ENCODE measurements at regions of chr12 and their contacts with region 1.

Region 1: DNA sequence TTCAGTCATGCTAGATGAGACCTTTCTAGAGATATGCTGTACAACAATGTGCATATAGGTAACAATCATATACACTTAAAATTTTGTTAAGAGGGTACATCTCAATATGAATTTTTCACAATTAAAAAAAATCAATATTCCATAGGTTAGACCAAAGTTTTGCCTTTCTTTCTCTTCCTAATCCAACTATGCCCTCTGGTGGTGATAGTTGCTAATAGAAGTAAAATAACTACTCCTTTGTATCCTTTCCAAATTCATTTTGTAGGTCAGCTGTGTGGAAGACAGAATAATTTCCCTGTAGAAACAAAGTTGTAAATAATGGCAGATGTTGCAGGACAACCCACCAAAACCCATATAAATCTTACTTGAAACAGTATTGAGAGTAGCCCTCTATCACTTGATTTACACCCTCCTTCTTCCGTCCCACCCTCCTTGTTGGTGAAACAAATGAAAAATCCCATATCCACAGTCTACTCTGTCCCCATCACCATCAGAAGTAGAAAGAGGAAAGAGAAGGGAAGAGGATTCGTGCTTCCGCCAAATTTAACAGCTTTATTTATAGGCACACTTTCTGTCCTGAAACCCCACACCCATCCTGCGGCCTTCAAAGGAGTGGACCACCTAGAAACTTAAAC is 34.2 kb upstream of the KICS2 start:
- DNase-seq: peak; percentile 24
- H3K4me3 Mint-ChIP-seq: no peak overlapping the region
- H3K27ac Mint-ChIP-seq: no peak overlapping the region
- H3K4me1 Mint-ChIP-seq: no peaks in the 10 kb centered on the region
- H3K27me3 Mint-ChIP-seq: no peaks in the 10 kb centered on the region
- CTCF ChIP-seq: peak; percentile 65

Region 2: DNA sequence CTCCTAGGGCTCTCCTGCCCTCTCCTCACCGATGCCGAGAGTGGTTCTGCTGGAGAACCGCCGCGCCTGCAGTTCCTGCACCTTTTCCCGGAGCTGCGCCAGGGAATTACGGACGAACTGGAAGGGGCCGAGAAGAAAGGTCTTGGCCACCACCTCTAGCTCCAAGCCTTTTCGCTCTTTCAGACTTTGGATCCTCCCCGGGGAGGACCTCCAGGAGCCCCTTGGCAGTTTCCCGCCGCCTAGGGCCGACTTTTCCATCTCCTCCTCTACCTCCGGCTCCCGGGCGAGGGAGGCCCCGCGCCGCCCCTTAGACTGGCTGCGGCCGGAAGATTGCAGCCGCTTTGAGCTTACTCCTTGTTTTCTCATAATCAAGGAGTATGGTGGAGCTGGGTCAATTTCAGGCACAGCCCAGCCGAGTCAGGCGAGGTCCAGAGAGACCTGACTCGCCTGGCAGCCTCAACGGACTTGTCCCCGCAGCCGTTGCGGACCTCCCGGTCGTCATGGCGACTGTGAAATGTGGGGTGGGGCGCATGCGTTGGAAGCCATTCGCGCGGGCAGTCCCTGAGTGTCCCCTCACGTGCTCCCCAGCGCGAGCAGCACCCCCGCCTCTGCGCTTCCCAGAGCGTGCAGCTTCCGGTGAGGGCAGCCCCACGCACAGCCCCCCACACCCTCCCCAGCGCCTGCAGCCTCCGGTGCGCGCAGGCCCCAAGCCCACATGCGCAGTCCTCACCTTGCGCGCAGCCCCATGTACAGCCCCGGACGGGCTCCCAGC is 588.1 kb before region 1 on chr12 and contains the start of gene DPY19L2:
- CTCF ChIA-PET with region 1: no interaction called
- intact Hi-C with region 1: loop called (anchors 10 kb)
- DNase-seq: peak; percentile 81
- H3K4me3 Mint-ChIP-seq: peak within 1 kb of the TSS; percentile 74
- H3K27ac Mint-ChIP-seq: peak within 1 kb of the TSS; percentile 61
- H3K4me1 Mint-ChIP-seq: peaks cover 26% of the 10 kb centered on the region
- H3K27me3 Mint-ChIP-seq: peaks cover 13% of the 10 kb centered on the region
- CTCF ChIP-seq: no peak
- total RNA-seq, gene DPY19L2: 9.2 and 10.1 TPM in 2 replicates

Region 3: DNA sequence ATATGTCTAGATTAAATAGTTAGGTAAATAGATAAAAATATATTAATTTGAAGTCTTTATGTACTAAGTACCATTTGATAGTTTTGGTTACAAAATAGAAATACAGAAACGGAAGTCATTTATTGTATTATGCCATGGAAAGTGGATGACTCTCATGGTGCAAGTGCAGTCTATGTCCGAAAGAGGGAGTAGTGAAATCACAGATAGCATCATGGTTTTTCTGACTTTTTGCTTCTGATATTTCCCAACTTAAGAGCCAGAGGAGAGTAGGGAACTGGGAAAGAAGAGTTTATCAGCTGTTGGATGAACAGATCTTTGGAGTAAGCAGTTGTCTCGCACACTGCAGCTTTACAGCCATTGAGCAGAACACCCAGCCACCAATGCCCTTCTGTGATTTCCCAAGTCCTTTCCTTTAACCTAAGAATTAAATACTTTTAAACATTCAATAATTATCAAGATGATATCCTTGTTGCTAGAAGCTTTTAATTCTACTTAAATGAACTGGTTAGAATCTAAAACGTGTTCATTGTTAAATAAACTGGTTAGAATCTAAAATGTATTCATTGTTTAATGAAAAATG is 430.2 kb before region 1 on chr12:
- CTCF ChIA-PET with region 1: interaction called, 4 read pairs
- intact Hi-C with region 1: loop called (anchors 1 kb)
- DNase-seq: no peak
- H3K4me3 Mint-ChIP-seq: no peak overlapping the region
- H3K27ac Mint-ChIP-seq: no peak overlapping the region
- H3K4me1 Mint-ChIP-seq: peaks cover 18% of the 10 kb centered on the region
- H3K27me3 Mint-ChIP-seq: no peaks in the 10 kb centered on the region
- CTCF ChIP-seq: peak; percentile 63

Region 4: GRCh38 chr12:63930971-63931370 is 325.3 kb before region 1 on chr12:
- CTCF ChIA-PET with region 1: no interaction called
- intact Hi-C with region 1: no loop called
- DNase-seq: no peak
- H3K4me3 Mint-ChIP-seq: no peak overlapping the region
- H3K27ac Mint-ChIP-seq: no peak overlapping the region
- H3K4me1 Mint-ChIP-seq: peaks cover 21% of the 10 kb centered on the region
- H3K27me3 Mint-ChIP-seq: no peaks in the 10 kb centered on the region
- CTCF ChIP-seq: no peak

Region 5: DNA sequence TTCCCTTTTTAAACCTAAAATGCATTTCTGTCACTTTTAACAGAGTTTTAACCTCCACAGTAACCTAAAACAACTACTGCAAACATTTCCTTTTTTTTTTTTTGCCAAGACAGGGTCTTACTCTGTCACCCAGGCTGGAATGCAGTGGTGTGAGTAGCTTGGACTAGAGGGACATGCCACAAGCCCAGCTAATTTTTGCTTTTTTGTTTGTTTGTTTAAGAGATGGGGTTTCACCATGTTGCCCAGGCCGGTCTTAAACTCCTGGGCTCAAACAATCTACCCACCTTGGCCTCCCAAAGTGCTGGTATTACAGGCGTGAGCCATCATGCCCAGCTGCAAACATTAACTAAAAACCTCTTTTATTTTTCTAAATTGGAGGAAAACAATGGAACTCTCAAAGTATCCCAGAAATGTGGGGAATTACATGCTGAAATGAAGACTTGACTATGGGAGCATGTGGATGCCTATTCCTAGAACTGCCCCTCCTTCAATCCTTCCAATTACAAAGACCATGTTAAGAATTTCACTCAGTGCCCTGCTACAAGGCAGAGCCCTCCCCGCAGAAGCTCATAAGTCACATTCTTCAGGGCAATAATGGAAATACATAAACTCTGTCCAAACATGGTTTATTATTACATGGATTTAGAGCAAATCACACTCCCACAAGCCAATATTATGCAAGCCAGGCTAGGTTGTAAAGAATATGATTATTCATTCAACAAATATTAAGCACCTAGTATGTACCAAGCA is 67.4 kb after region 1 on chr12:
- CTCF ChIA-PET with region 1: no interaction called
- intact Hi-C with region 1: no loop called
- DNase-seq: no peak
- H3K4me3 Mint-ChIP-seq: no peak overlapping the region
- H3K27ac Mint-ChIP-seq: no peak overlapping the region
- H3K4me1 Mint-ChIP-seq: no peaks in the 10 kb centered on the region
- H3K27me3 Mint-ChIP-seq: no peaks in the 10 kb centered on the region
- CTCF ChIP-seq: no peak

Region 6: DNA sequence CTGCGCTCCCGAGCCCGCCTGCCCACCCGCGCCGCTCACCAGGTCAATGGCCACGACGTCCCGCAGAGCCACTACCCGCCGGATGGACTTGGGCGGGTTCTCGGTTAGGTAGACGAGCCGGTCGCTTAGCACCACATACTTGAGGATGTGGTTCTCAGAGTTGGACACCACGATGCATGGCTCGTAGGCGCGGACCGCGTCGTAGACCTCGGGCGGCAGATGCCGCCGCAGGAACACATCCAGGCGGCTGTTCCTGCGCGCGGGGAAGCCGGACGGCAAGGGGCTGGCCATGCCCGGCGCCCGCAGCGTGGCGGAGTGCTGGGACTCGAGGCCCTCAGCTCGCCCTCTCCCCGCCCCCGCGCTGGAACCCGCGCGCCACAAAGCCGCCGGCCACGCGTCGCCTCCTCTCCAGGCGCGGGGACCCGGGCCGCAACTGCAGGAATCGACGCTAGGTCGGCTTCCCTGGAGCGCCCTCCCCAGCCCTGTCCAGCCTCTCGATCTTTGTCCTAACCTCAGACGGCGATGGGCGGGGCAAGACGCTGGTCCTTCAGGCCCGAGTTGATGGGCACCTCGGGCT is 134.1 kb after region 1 on chr12 and contains the start of gene C12orf56:
- CTCF ChIA-PET with region 1: no interaction called
- intact Hi-C with region 1: no loop called
- DNase-seq: peak; percentile 74
- H3K4me3 Mint-ChIP-seq: peak within 1 kb of the TSS; percentile 68
- H3K27ac Mint-ChIP-seq: no peak within 1 kb of the TSS
- H3K4me1 Mint-ChIP-seq: peaks cover 18% of the 10 kb centered on the region
- H3K27me3 Mint-ChIP-seq: no peaks in the 10 kb centered on the region
- CTCF ChIP-seq: no peak
- total RNA-seq, gene C12orf56: 3.8 and 4.7 TPM in 2 replicates

Region 7: GRCh38 chr12:64706306-64706705 is 450.0 kb after region 1 on chr12:
- CTCF ChIA-PET with region 1: no interaction called
- intact Hi-C with region 1: no loop called
- DNase-seq: no peak
- H3K4me3 Mint-ChIP-seq: no peak overlapping the region
- H3K27ac Mint-ChIP-seq: peak overlapping the region; percentile 42
- H3K4me1 Mint-ChIP-seq: no peaks in the 10 kb centered on the region
- H3K27me3 Mint-ChIP-seq: no peaks in the 10 kb centered on the region
- CTCF ChIP-seq: no peak

Measured in Calu3 (cell line).